ENCODE measurements at regions of chr1 and their contacts with region 1.

Region 1: DNA sequence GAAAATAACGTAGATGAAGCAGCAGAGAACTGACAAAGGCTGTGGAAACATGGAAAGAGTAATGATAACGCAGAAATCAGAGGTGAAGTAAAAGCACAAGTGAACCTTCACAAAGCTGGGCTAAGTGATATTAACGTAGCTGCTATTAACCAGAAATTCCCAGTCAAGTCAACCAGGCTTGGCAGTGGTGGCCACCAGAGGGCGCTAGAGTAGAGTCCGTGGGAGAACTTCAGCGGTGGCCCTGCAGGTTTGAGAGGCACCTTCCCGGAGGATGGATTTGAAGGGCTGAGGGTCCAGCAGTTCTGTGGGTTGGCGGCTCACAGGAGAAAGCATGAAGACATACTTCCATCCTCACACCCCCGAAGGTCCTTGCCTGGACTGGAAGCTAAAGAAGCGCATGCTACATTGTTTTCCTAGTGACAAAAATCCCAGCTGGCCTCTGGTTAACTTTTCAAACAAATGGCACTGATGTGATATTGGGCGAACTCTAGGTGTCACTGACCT is 81.7 kb upstream of the ZNF648 start:
- DNase-seq: peak; percentile 67 to 97
- H3K4me3 ChIP-seq: no peak overlapping the region
- H3K27ac ChIP-seq: no peak overlapping the region
- H3K4me1 ChIP-seq: peaks cover 0 to 8% (median 6%) of the 10 kb centered on the region in 4 experiments; a peak in 5 of 7 replicates
- H3K27me3 ChIP-seq: no peaks in the 10 kb centered on the region
- CTCF ChIP-seq: peak; percentile 84 to 96 (median 92)
- EP300 ChIP-seq: no peak
- POLR2A ChIP-seq: no peak
- RAD21 ChIP-seq: peak; percentile 89 to 96

Region 2: GRCh38 chr1:181969902-181970301 is 173.3 kb before region 1 on chr1:
- CTCF ChIA-PET with region 1: no interaction called
- POLR2A ChIA-PET with region 1: no interaction called
- DNase-seq: peak; percentile 85 to 87
- H3K4me3 ChIP-seq: peak overlapping the region in 1 of 4 experiments; percentile 39; a peak in 1 of 8 replicates
- H3K27ac ChIP-seq: peak overlapping the region; percentile 85; the same call in 1 of the 2 replicates
- H3K4me1 ChIP-seq: peaks cover 0 to 17% (median 5%) of the 10 kb centered on the region in 4 experiments; a peak in 4 of 7 replicates
- H3K27me3 ChIP-seq: no peaks in the 10 kb centered on the region
- CTCF ChIP-seq: no peak
- EP300 ChIP-seq: peak in 1 of 2 experiments; percentile 94; a peak in 1 of 3 replicates
- POLR2A ChIP-seq: no peak
- RAD21 ChIP-seq: no peak

Region 3: GRCh38 chr1:182113879-182114626 is 29.2 kb before region 1 on chr1:
- CTCF ChIA-PET with region 1: interaction called, 47 read pairs
- POLR2A ChIA-PET with region 1: no interaction called
- DNase-seq: peak in 1 of 2 experiments; percentile 44
- H3K4me3 ChIP-seq: no peak overlapping the region
- H3K27ac ChIP-seq: no peak overlapping the region
- H3K4me1 ChIP-seq: peaks cover 0 to 2% (median 0%) of the 10 kb centered on the region in 4 experiments; a peak in 1 of 7 replicates
- H3K27me3 ChIP-seq: no peaks in the 10 kb centered on the region
- CTCF ChIP-seq: no peak
- EP300 ChIP-seq: no peak
- POLR2A ChIP-seq: no peak
- RAD21 ChIP-seq: no peak

Region 4: DNA sequence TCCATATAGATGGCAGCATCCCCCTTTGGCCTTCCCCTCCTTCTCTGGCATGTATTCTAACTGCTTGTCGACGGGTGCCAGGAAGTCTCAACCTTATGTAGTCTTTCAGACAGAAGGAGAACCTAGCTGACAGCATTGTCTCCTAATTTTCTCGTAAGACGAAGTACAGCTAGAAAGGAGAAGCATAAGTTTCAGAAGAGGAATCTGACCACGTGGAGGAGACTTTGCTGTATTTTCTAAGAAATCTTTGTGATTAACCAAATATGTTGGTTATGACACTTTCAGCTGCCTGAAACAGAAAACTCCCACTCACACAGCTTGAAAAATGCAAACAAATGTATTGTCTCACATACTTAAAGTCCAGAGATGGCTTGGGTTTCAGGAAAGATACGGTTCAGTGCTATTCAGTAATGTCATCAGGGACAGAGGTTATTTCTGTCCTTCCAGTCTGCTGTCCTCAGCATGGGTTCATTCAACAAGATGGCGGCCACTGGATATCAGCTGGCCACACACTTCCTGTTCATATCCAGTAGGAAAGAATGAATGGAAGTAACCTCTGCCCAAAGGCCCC is 27.8 kb after region 1 on chr1:
- CTCF ChIA-PET with region 1: interaction called, 18 read pairs
- POLR2A ChIA-PET with region 1: no interaction called
- DNase-seq: no peak
- H3K4me3 ChIP-seq: no peak overlapping the region
- H3K27ac ChIP-seq: no peak overlapping the region
- H3K4me1 ChIP-seq: no peaks in the 10 kb centered on the region
- H3K27me3 ChIP-seq: no peaks in the 10 kb centered on the region
- CTCF ChIP-seq: no peak
- EP300 ChIP-seq: no peak
- POLR2A ChIP-seq: no peak
- RAD21 ChIP-seq: no peak

Region 5: DNA sequence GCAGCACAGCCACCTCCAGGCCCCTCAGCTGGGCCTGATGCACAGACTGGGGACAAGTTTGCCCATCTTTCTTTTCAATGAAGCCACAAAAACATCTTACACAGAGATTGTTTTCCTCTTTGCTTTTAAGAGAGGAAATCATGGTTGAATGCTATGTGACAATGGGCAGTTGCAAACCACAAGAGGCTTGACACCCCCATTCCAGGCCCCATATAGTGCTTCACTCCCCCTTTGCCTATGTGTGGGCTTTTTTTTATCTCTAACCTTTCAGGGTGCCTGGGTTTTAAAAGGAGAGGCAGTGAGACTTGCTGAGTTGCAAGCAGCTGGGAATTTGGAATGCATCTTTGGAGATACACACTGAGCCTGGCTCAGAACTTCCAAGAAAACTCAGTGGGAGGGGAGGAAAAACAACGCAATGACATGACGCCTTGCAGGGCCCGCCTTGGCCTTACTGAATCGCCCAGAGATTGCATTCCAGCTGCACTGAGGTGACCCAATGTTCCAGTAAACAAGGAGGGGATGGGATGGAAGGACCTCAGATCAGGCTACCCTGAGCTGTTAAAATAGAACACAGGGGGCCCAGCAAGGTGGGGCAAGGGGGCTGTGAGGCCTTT is 63.5 kb after region 1 on chr1:
- CTCF ChIA-PET with region 1: interaction called, 10 read pairs
- POLR2A ChIA-PET with region 1: no interaction called
- DNase-seq: no peak
- H3K4me3 ChIP-seq: no peak overlapping the region
- H3K27ac ChIP-seq: no peak overlapping the region
- H3K4me1 ChIP-seq: no peaks in the 10 kb centered on the region; a peak in 2 of 7 replicates
- H3K27me3 ChIP-seq: no peaks in the 10 kb centered on the region
- CTCF ChIP-seq: no peak
- EP300 ChIP-seq: no peak
- POLR2A ChIP-seq: no peak
- RAD21 ChIP-seq: no peak

Region 6: GRCh38 chr1:182309631-182310351 is 166.6 kb after region 1 on chr1:
- CTCF ChIA-PET with region 1: interaction called, 11 read pairs
- POLR2A ChIA-PET with region 1: no interaction called
- DNase-seq: no peak
- H3K4me3 ChIP-seq: no peak overlapping the region
- H3K27ac ChIP-seq: no peak overlapping the region
- H3K4me1 ChIP-seq: peaks cover 0 to 2% (median 0%) of the 10 kb centered on the region in 4 experiments; a peak in 2 of 7 replicates
- H3K27me3 ChIP-seq: no peaks in the 10 kb centered on the region
- CTCF ChIP-seq: no peak
- EP300 ChIP-seq: no peak
- POLR2A ChIP-seq: no peak
- RAD21 ChIP-seq: no peak

Region 7: DNA sequence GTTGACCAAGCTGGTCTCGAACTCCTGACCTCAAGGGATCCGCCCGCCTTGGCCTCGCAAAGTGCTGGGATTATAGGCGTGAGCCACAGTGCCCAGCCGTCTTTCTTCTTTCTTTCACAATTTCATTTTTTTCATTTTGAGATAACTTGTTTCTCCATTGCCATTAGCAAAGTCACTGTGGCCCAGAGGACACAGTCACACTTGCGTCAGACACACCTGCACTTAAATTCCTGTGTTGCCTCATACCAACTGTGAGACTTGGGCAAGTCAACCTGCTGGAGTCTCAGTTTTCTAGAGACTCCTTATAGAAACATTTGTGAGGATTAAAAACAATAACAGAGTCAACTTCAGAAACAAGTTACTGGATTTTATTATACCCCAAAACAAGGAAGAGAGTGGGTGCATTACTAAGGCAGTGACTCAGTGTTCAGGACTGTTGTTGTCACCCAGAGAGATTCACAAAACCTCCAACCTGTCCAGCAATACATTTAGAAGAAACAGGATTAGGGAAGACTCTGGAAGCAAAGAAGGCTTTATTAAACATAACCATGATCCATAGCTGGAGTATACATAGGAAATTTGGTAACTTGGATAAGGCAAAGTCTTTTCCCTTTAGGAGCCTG is 254.7 kb after region 1 on chr1:
- CTCF ChIA-PET with region 1: interaction called, 107 read pairs
- POLR2A ChIA-PET with region 1: interaction called, 17 read pairs
- DNase-seq: no peak
- H3K4me3 ChIP-seq: no peak overlapping the region
- H3K27ac ChIP-seq: no peak overlapping the region
- H3K4me1 ChIP-seq: peaks cover 3 to 4% (median 3%) of the 10 kb centered on the region in 4 experiments; a peak in 4 of 7 replicates
- H3K27me3 ChIP-seq: no peaks in the 10 kb centered on the region; a peak in 1 of 7 replicates
- CTCF ChIP-seq: no peak
- EP300 ChIP-seq: no peak
- POLR2A ChIP-seq: no peak
- RAD21 ChIP-seq: no peak